Endothelial cell of umbilical vein (primary cell): ENCODE measurements at regions of chr11 and their contacts with region 1.

Region 1: GRCh38 chr11:33065445-33066178 is 26.2 kb downstream of the TCP11L1 start:
- DNase-seq: peak; percentile 56
- H3K4me3 ChIP-seq: no peak overlapping the region
- H3K27ac ChIP-seq: no peak overlapping the region
- H3K4me1 ChIP-seq: peaks cover 2% of the 10 kb centered on the region
- H3K27me3 ChIP-seq: no peaks in the 10 kb centered on the region
- CTCF ChIP-seq: peak; percentile 87 to 93
- POLR2A ChIP-seq: no peak

Region 2: DNA sequence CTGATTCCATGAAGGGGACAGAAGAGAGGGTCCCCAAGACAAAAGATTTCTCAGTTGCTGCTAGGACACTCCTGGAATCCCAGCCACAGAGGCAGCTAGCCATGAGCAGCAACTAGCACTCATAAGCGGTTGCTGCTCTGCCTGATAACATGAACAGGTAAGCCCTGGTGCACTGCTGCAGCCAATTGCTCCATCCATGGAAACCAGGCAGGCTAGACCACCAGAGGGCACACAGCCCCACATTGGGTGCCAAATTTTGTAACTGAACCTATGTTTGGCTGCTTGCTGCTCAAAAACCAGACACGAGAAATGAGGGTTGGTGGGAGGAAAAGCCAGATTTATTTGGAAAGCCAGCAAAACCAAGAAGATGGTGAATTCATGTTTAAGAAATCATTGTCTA is 194.9 kb before region 1 on chr11:
- CTCF ChIA-PET with region 1: interaction called, 5 read pairs
- POLR2A ChIA-PET with region 1: no interaction called
- dilution Hi-C with region 1: no loop called
- intact Hi-C with region 1: loop called (anchors 1 kb)
- DNase-seq: no peak
- H3K4me3 ChIP-seq: no peak overlapping the region
- H3K27ac ChIP-seq: no peak overlapping the region
- H3K4me1 ChIP-seq: no peaks in the 10 kb centered on the region
- H3K27me3 ChIP-seq: peaks cover 0 to 3% of the 10 kb centered on the region in 2 experiments
- CTCF ChIP-seq: peak; percentile 13 to 32
- POLR2A ChIP-seq: no peak

Region 3: GRCh38 chr11:32893343-32894148 is 172.1 kb before region 1 on chr11:
- CTCF ChIA-PET with region 1: interaction called, 14 read pairs
- POLR2A ChIA-PET with region 1: no interaction called
- dilution Hi-C with region 1: no loop called
- intact Hi-C with region 1: no loop called
- DNase-seq: peak; percentile 56
- H3K4me3 ChIP-seq: peak overlapping the region; percentile 82 to 98 (median 93)
- H3K27ac ChIP-seq: peak overlapping the region; percentile 89
- H3K4me1 ChIP-seq: peaks cover 13% of the 10 kb centered on the region
- H3K27me3 ChIP-seq: no peaks in the 10 kb centered on the region
- CTCF ChIP-seq: peak; percentile 45 to 55
- POLR2A ChIP-seq: no peak

Region 4: GRCh38 chr11:32968541-32968940 is 97.1 kb before region 1 on chr11:
- CTCF ChIA-PET with region 1: interaction called, 18 read pairs
- POLR2A ChIA-PET with region 1: no interaction called
- dilution Hi-C with region 1: no loop called
- intact Hi-C with region 1: no loop called
- DNase-seq: no peak
- H3K4me3 ChIP-seq: no peak overlapping the region
- H3K27ac ChIP-seq: no peak overlapping the region
- H3K4me1 ChIP-seq: no peaks in the 10 kb centered on the region
- H3K27me3 ChIP-seq: no peaks in the 10 kb centered on the region
- CTCF ChIP-seq: no peak
- POLR2A ChIP-seq: no peak

Region 5: GRCh38 chr11:33021937-33022336 is 43.7 kb before region 1 on chr11:
- CTCF ChIA-PET with region 1: no interaction called
- POLR2A ChIA-PET with region 1: no interaction called
- dilution Hi-C with region 1: no loop called
- intact Hi-C with region 1: no loop called
- DNase-seq: no peak
- H3K4me3 ChIP-seq: no peak overlapping the region
- H3K27ac ChIP-seq: no peak overlapping the region
- H3K4me1 ChIP-seq: no peaks in the 10 kb centered on the region
- H3K27me3 ChIP-seq: peaks cover 15 to 37% of the 10 kb centered on the region in 2 experiments
- CTCF ChIP-seq: no peak
- POLR2A ChIP-seq: no peak

Region 6: DNA sequence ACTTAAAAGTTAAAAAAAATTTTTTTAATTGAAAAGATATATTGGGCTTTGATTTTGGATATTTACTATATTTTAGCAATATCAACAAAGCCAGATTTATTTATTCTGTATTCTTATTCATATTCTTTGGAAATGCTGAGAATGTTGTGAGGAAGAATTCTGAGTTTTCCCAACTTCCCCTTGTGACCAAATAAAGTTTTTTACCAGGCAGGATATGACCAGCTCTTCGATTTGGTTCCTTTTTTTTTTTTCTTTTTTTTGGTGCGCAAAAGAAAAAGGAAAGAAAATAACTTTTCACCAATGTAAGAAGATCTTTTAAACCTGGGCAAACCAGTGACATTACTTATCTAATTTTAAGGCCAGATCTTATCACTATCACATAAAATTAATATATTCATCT is 13.4 kb before region 1 on chr11:
- CTCF ChIA-PET with region 1: interaction called, 27 read pairs
- POLR2A ChIA-PET with region 1: no interaction called
- dilution Hi-C with region 1: no loop called
- intact Hi-C with region 1: no loop called
- DNase-seq: no peak
- H3K4me3 ChIP-seq: no peak overlapping the region
- H3K27ac ChIP-seq: no peak overlapping the region
- H3K4me1 ChIP-seq: no peaks in the 10 kb centered on the region
- H3K27me3 ChIP-seq: no peaks in the 10 kb centered on the region
- CTCF ChIP-seq: no peak
- POLR2A ChIP-seq: no peak